AG04449 (cell line): ENCODE measurements at regions of chr10 and their contacts with region 1.

Region 1: GRCh38 chr10:70221030-70221429 is 12.2 kb downstream of the PPA1 start:
- DNase-seq: no peak
- H3K4me3 ChIP-seq: no peak overlapping the region
- CTCF ChIP-seq: no peak

Region 2: GRCh38 chr10:70115948-70116682 is 104.9 kb before region 1 on chr10:
- CTCF ChIA-PET with region 1: interaction called, 10 read pairs
- POLR2A ChIA-PET with region 1: no interaction called
- DNase-seq: no peak
- H3K4me3 ChIP-seq: no peak overlapping the region
- CTCF ChIP-seq: peak; percentile 71

Region 3: GRCh38 chr10:70233109-70233938 is 12.3 kb after region 1 on chr10 and contains the start of gene PPA1:
- CTCF ChIA-PET with region 1: interaction called, 43 read pairs
- POLR2A ChIA-PET with region 1: interaction called, 6 read pairs
- DNase-seq: peak; percentile 47
- H3K4me3 ChIP-seq: peak within 1 kb of the TSS; percentile 81
- CTCF ChIP-seq: peak; percentile 21

Region 4: GRCh38 chr10:70250961-70251680 is 30.1 kb after region 1 on chr10:
- CTCF ChIA-PET with region 1: no interaction called
- POLR2A ChIA-PET with region 1: no interaction called
- DNase-seq: no peak
- H3K4me3 ChIP-seq: no peak overlapping the region
- CTCF ChIP-seq: no peak

Region 5: GRCh38 chr10:70348228-70348850 is 127.3 kb after region 1 on chr10:
- CTCF ChIA-PET with region 1: interaction called, 22 read pairs
- POLR2A ChIA-PET with region 1: no interaction called
- DNase-seq: no peak
- H3K4me3 ChIP-seq: no peak overlapping the region
- CTCF ChIP-seq: peak; percentile 59

Region 6: GRCh38 chr10:70376436-70377378 is 155.7 kb after region 1 on chr10:
- CTCF ChIA-PET with region 1: interaction called, 21 read pairs
- POLR2A ChIA-PET with region 1: no interaction called
- DNase-seq: no peak
- H3K4me3 ChIP-seq: no peak overlapping the region
- CTCF ChIP-seq: no peak

Region 7: GRCh38 chr10:70705121-70705861 is 484.3 kb after region 1 on chr10:
- CTCF ChIA-PET with region 1: no interaction called
- POLR2A ChIA-PET with region 1: no interaction called
- DNase-seq: no peak
- H3K4me3 ChIP-seq: no peak overlapping the region
- CTCF ChIP-seq: no peak